ENCODE measurements at regions of chr17 and their contacts with region 1.

Region 1: DNA sequence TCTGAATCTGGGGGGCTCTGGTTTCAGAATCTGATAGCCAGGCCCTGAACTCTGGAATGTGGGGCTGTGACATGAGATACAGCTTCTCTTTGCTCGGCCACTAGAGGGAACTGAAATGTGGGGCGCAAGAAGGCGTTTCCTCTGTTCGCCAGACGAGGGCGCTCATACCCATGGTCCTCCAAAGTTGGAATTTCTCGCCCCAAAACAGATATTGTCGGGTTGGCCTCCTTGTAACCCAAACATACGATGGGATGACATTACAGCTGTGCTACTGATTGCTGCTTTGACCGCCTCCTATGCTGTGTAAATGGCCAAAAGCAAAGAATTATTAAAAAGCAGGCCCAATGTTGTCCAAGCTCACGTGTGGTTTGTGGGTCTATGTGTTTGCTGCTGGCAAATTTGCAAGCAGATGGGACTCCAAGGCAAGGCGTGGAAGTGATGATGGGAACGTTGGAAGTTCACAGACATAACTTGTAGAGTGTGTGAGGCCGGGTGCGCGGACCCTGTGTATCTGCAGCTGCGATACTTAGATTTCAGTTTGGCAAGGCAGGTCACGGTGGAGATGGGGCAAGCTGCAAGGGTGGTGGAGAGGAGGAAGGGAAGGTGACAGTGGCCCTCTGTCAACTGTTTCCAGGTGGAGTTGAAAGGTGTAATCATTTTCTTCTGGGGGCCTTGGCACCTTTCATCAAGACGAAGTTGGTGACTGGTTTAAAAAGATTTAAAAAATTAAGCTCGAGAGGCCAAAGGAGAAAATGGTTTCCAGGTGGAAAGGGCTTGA is 13.0 kb upstream of the MSI2 start:
- DNase-seq: peak; percentile 65 to 79
- H3K4me3 ChIP-seq: no peak overlapping the region
- H3K4me3 Mint-ChIP-seq: no peak overlapping the region
- H3K27ac Mint-ChIP-seq: no peak overlapping the region
- H3K4me1 ChIP-seq: no peaks in the 10 kb centered on the region
- H3K4me1 Mint-ChIP-seq: peaks cover 11% of the 10 kb centered on the region
- H3K27me3 ChIP-seq: no peaks in the 10 kb centered on the region
- H3K27me3 Mint-ChIP-seq: no peaks in the 10 kb centered on the region
- CTCF ChIP-seq: peak; percentile 99 to 100

Region 2: GRCh38 chr17:57255776-57256681 is 12.7 kb after region 1 on chr17 and contains the start of gene MSI2:
- CTCF ChIA-PET with region 1: interaction called, 18 read pairs
- POLR2A ChIA-PET with region 1: interaction called, 9 read pairs
- intact Hi-C with region 1: no loop called
- DNase-seq: peak; percentile 90 to 94
- H3K4me3 ChIP-seq: peak within 1 kb of the TSS; percentile 73
- H3K4me3 Mint-ChIP-seq: peak within 1 kb of the TSS; percentile 95
- H3K27ac Mint-ChIP-seq: peak within 1 kb of the TSS; percentile 92
- H3K4me1 ChIP-seq: peaks cover 17% of the 10 kb centered on the region; the same call in 1 of the 2 replicates
- H3K4me1 Mint-ChIP-seq: peaks cover 23% of the 10 kb centered on the region
- H3K27me3 ChIP-seq: no peaks in the 10 kb centered on the region
- H3K27me3 Mint-ChIP-seq: no peaks in the 10 kb centered on the region
- CTCF ChIP-seq: no peak
- total RNA-seq, gene MSI2: 174 and 185 TPM in 2 replicates

Region 3: DNA sequence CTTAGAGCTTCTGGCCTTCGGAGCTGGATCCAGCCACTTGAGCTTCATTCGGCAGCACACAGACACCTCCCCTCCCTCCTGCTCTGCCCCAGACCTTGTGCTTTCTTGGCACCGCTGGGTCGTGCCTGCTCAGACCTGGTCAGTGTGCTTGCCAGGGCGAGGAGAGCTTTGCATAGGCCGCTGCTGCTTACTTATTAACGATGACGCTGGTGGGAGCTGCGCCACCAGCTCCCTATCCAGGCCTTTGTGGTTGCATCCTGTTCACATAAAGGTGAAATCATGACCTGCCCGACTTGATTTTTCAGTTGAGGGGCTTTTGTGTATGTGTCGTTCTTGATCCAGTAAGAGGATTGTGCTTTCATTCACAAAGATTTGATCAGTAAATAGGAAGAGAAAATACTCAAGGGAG is 114.0 kb after region 1 on chr17:
- CTCF ChIA-PET with region 1: interaction called, 11 read pairs
- POLR2A ChIA-PET with region 1: no interaction called
- intact Hi-C with region 1: no loop called
- DNase-seq: no peak
- H3K4me3 ChIP-seq: no peak overlapping the region
- H3K4me3 Mint-ChIP-seq: no peak overlapping the region
- H3K27ac Mint-ChIP-seq: peak overlapping the region; percentile 77
- H3K4me1 ChIP-seq: peaks cover 31% of the 10 kb centered on the region
- H3K4me1 Mint-ChIP-seq: peaks cover 49% of the 10 kb centered on the region
- H3K27me3 ChIP-seq: no peaks in the 10 kb centered on the region
- H3K27me3 Mint-ChIP-seq: no peaks in the 10 kb centered on the region
- CTCF ChIP-seq: no peak

Region 4: GRCh38 chr17:57408071-57408811 is 164.9 kb after region 1 on chr17:
- CTCF ChIA-PET with region 1: interaction called, 13 read pairs
- POLR2A ChIA-PET with region 1: no interaction called
- intact Hi-C with region 1: no loop called
- DNase-seq: no peak
- H3K4me3 ChIP-seq: no peak overlapping the region
- H3K4me3 Mint-ChIP-seq: no peak overlapping the region
- H3K27ac Mint-ChIP-seq: peak overlapping the region; percentile 93
- H3K4me1 ChIP-seq: peaks cover 30% of the 10 kb centered on the region
- H3K4me1 Mint-ChIP-seq: peaks cover 32% of the 10 kb centered on the region
- H3K27me3 ChIP-seq: no peaks in the 10 kb centered on the region; the same call in 1 of the 2 replicates
- H3K27me3 Mint-ChIP-seq: no peaks in the 10 kb centered on the region
- CTCF ChIP-seq: no peak

Region 5: GRCh38 chr17:57518587-57519581 is 275.5 kb after region 1 on chr17:
- CTCF ChIA-PET with region 1: interaction called, 10 read pairs
- POLR2A ChIA-PET with region 1: no interaction called
- intact Hi-C with region 1: no loop called
- DNase-seq: peak; percentile 69 to 82
- H3K4me3 ChIP-seq: no peak overlapping the region
- H3K4me3 Mint-ChIP-seq: peak overlapping the region; percentile 31
- H3K27ac Mint-ChIP-seq: peak overlapping the region; percentile 94
- H3K4me1 ChIP-seq: peaks cover 60% of the 10 kb centered on the region
- H3K4me1 Mint-ChIP-seq: peaks cover 55% of the 10 kb centered on the region
- H3K27me3 ChIP-seq: no peaks in the 10 kb centered on the region
- H3K27me3 Mint-ChIP-seq: no peaks in the 10 kb centered on the region
- CTCF ChIP-seq: no peak

Region 6: GRCh38 chr17:57739402-57740392 is 496.3 kb after region 1 on chr17:
- CTCF ChIA-PET with region 1: interaction called, 3 read pairs
- POLR2A ChIA-PET with region 1: no interaction called
- intact Hi-C with region 1: loop called (anchors 1 kb)
- DNase-seq: peak in 1 of 2 experiments; percentile 62
- H3K4me3 ChIP-seq: no peak overlapping the region
- H3K4me3 Mint-ChIP-seq: no peak overlapping the region
- H3K27ac Mint-ChIP-seq: no peak overlapping the region
- H3K4me1 ChIP-seq: no peaks in the 10 kb centered on the region
- H3K4me1 Mint-ChIP-seq: no peaks in the 10 kb centered on the region
- H3K27me3 ChIP-seq: no peaks in the 10 kb centered on the region
- H3K27me3 Mint-ChIP-seq: peaks cover 17% of the 10 kb centered on the region
- CTCF ChIP-seq: peak; percentile 65 to 69

Measured in Caco-2 (cell line).